Activated T-helper 1 cell treated with anti-CD3 and anti-CD28 coated beads, Interleukin-12 subunit alpha, Interleukin-12 subunit beta, Interleukin-2, Interleukin-4 antibody, amounts not matched to agents 30 ng/mL and 10 ng/mL and 1 ng/mL, durations not matched to agents 14 hours and 24 hours and 36 hours (primary cell): ENCODE measurements at regions of chr9 and their contacts with region 1.

Region 1: DNA sequence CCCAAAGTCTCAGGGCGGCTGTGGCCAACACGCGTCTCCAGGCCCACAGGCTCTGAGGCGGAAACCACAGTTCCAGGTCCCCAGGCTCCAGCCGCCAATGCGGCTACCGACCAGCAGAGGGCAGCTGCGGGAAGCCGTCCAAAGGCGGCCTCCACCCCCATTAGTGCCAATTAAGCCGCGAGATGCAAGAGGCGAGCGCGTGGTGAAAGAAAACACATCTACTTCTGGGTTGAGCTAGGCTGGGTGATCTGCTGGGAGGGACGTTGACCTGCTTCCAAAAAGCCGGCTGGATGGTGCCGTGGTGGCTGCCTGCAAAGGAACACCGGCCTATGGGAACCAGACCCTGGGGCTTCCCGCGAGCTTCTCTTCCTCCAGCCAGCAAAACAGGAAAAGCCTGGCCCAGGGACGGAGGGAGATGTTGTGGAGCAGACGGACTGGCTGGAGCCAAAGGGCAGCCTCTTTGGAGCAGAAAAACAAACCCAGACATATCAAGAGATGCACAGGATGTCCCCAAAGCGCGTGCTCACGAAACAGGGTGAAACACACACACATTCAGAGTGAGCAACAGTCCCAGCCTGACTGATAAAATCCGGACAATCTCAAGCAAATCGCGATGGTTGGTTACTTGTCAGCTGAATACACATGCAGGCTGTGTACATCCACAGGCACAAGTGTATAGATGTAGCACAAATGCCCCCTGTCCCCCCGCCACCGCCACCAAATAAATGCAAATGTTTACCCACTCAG is 187.1 kb upstream of the BRINP1 start:
- DNase-seq: peak; percentile 38
- H3K4me3 Mint-ChIP-seq: peak overlapping the region; percentile 6
- H3K27ac Mint-ChIP-seq: no peak overlapping the region
- H3K4me1 Mint-ChIP-seq: peaks cover 6% of the 10 kb centered on the region
- H3K27me3 Mint-ChIP-seq: peaks cover 6% of the 10 kb centered on the region

Region 2: DNA sequence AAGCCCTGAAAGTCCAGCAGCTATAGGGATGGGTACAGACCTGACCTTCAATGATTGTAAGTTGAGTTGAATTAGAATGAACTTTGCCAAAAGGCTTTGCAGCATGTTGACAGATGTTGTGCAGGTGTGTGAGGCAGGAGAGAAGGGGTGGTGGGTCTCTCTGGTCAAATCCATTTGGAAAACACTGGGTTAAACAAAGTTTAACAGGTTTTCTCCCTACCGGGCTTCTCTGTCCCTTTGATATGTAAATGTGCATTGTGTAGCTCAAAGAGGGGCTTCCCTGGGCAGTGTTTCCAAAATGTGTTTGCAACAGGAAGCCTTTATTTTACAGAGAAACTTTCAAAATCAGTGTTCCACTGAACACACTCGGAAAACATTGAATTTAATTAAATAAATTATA is 115.0 kb before region 1 on chr9:
- intact Hi-C with region 1: no loop called
- DNase-seq: no peak
- H3K4me3 Mint-ChIP-seq: no peak overlapping the region
- H3K27ac Mint-ChIP-seq: no peak overlapping the region
- H3K4me1 Mint-ChIP-seq: no peaks in the 10 kb centered on the region
- H3K27me3 Mint-ChIP-seq: no peaks in the 10 kb centered on the region

Region 3: DNA sequence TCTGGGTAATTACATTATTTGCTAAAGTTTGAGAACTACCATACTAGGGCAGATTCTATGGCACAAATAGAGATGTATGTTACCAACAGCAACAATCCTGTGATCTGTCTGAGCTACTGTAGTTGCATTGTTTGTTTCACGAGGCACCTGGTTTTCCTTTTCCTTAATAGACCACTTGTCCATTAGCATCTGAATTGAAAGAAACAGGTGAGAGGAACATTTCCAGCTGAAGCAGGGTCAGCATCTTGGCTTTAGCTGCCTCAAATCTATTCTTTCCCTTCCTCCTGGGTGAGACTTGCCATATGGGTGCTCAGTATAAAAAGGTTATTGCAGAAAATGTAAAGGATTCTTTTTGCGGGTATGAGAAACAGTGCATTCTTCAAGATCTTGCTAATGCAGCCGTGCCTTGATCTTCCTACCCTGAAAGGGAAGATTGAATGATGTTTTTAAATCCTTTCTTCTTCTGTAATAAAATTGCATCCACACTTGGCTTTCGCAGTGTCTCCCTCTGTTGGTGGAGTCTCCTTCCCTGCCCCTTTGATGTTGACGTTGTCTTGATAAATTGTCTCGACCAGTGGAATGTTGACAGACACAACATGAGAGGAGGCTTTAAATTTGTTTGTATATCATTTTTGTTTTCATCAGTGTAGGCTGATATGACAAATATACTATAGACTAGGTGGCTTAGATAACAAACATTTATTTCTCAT is 69.0 kb before region 1 on chr9:
- intact Hi-C with region 1: no loop called
- DNase-seq: no peak
- H3K4me3 Mint-ChIP-seq: no peak overlapping the region
- H3K27ac Mint-ChIP-seq: no peak overlapping the region
- H3K4me1 Mint-ChIP-seq: no peaks in the 10 kb centered on the region
- H3K27me3 Mint-ChIP-seq: peaks cover 1% of the 10 kb centered on the region

Region 4: GRCh38 chr9:120348951-120349429 is 792.7 kb after region 1 on chr9:
- intact Hi-C with region 1: loop called (anchors 2 kb)
- DNase-seq: no peak
- H3K4me3 Mint-ChIP-seq: no peak overlapping the region
- H3K27ac Mint-ChIP-seq: no peak overlapping the region
- H3K4me1 Mint-ChIP-seq: no peaks in the 10 kb centered on the region
- H3K27me3 Mint-ChIP-seq: peaks cover 3% of the 10 kb centered on the region